ENCODE measurements at regions of chr2 and their contacts with region 1.

Region 1: DNA sequence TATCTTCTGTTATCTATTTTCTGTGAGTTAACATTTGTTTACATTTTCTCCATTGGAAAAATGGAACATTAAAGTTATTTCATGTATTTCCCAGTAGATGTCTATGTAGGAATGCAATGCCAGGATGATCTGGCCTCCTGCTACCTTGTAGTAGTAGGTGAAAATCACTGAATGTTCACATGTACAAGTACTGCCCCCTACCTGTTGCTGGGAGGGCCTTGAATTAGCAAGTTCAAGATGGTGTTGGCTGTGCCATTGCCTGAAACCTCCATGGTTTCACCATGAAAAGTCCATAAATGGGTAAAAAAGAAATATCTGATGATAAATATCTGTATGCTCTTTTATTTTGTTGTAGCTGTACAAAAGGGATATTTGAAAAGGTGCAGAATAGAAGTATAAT is 30.7 kb downstream of the XRCC5 start:
- DNase-seq: no peak
- H3K4me3 ChIP-seq: no peak overlapping the region
- H3K27ac ChIP-seq: no peak overlapping the region
- H3K4me1 ChIP-seq: no peaks in the 10 kb centered on the region
- H3K27me3 ChIP-seq: no peaks in the 10 kb centered on the region
- CTCF ChIP-seq: peak; percentile 17 to 66 (median 30)
- EP300 ChIP-seq: no peak
- POLR2A ChIP-seq: no peak
- RAD21 ChIP-seq: peak; percentile 18 to 40; a peak in 2 of 4 replicates

Region 2: GRCh38 chr2:216114714-216115557 is 24.9 kb before region 1 on chr2:
- CTCF ChIA-PET with region 1: interaction called, 18 read pairs
- POLR2A ChIA-PET with region 1: interaction called, 101 read pairs
- DNase-seq: peak; percentile 98 to 99
- H3K4me3 ChIP-seq: peak overlapping the region in 3 of 4 experiments; percentile 17 to 56 (median 24); a peak in 4 of 8 replicates
- H3K27ac ChIP-seq: peak overlapping the region; percentile 92
- H3K4me1 ChIP-seq: peaks cover 6 to 15% (median 10%) of the 10 kb centered on the region in 4 experiments; a peak in 6 of 7 replicates
- H3K27me3 ChIP-seq: no peaks in the 10 kb centered on the region
- CTCF ChIP-seq: peak; percentile 68 to 93 (median 75)
- EP300 ChIP-seq: no peak
- POLR2A ChIP-seq: peak; percentile 70 to 89
- RAD21 ChIP-seq: no peak; a peak in 1 of 4 replicates

Region 3: GRCh38 chr2:216119986-216120385 is 19.9 kb before region 1 on chr2:
- CTCF ChIA-PET with region 1: interaction called, 23 read pairs
- POLR2A ChIA-PET with region 1: interaction called, 101 read pairs
- DNase-seq: no peak
- H3K4me3 ChIP-seq: no peak overlapping the region
- H3K27ac ChIP-seq: no peak overlapping the region
- H3K4me1 ChIP-seq: peaks cover 0 to 6% (median 5%) of the 10 kb centered on the region in 4 experiments; a peak in 5 of 7 replicates
- H3K27me3 ChIP-seq: no peaks in the 10 kb centered on the region
- CTCF ChIP-seq: no peak
- EP300 ChIP-seq: no peak
- POLR2A ChIP-seq: no peak
- RAD21 ChIP-seq: no peak

Region 4: DNA sequence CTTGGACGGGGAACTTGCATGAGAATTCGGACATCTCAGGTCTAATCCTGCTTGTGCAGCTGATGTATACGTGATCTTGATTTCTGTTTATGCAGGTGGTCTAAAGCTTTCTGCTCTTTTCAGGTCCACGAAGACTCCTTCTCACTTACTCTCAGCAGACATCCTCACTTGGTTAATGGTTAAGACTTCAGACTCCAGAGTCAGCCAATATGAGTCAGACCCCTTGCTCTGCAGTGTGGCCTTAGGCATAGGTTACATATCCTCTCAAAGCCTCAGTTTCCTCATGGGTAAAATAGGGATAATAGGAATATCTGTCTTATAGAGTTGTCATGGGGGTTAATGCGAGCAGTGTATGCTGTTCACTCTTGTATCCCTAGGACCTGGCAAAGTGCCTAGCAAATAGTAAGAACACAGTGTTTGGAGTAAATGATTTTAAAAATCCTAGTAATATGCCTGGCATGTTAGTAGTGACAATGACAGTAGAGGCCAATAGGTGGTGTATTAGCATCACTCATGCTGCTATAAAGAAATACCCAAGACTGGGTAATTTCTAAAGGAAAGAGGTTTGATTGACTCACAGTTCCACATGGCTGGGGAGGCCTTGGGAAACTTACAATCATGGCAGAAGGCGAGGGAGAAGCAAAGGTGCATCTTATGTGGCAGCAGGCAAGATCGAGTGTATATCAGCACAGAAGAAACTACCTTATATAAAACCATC is 11.6 kb after region 1 on chr2:
- CTCF ChIA-PET with region 1: interaction called, 6 read pairs
- POLR2A ChIA-PET with region 1: interaction called, 32 read pairs
- DNase-seq: no peak
- H3K4me3 ChIP-seq: no peak overlapping the region
- H3K27ac ChIP-seq: no peak overlapping the region
- H3K4me1 ChIP-seq: no peaks in the 10 kb centered on the region
- H3K27me3 ChIP-seq: no peaks in the 10 kb centered on the region
- CTCF ChIP-seq: peak in 1 of 3 experiments; percentile 9; a peak in 1 of 4 replicates
- EP300 ChIP-seq: no peak
- POLR2A ChIP-seq: 0 out of 3 replicates have a peak, but pooled peaks of 1 of the 2 experiments have one; percentile 18
- RAD21 ChIP-seq: peak; percentile 12 to 18; a peak in 2 of 4 replicates

Region 5: DNA sequence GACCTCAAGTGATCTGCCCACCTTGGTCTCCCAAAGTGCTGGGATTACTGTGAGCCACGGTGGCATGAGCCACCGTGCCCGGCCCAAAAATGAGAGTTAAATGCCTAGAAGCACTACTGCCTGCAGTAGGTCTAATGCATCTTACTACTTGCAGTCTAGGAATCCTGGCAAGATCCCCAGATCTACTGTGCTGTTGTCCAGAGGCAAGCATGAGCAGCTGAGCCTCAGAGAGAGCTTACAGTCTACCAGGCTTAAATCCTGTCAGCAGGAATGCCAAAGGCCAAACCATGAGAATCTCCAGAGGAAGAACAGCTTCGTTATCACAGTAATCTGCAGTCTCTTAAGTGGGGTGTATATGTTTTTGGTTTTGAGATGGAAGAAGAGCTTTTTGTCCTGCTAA is 23.6 kb after region 1 on chr2:
- CTCF ChIA-PET with region 1: interaction called, 7 read pairs
- POLR2A ChIA-PET with region 1: interaction called, 32 read pairs
- DNase-seq: no peak
- H3K4me3 ChIP-seq: no peak overlapping the region
- H3K27ac ChIP-seq: no peak overlapping the region
- H3K4me1 ChIP-seq: no peaks in the 10 kb centered on the region
- H3K27me3 ChIP-seq: no peaks in the 10 kb centered on the region
- CTCF ChIP-seq: no peak
- EP300 ChIP-seq: no peak
- POLR2A ChIP-seq: no peak
- RAD21 ChIP-seq: no peak

Region 6: DNA sequence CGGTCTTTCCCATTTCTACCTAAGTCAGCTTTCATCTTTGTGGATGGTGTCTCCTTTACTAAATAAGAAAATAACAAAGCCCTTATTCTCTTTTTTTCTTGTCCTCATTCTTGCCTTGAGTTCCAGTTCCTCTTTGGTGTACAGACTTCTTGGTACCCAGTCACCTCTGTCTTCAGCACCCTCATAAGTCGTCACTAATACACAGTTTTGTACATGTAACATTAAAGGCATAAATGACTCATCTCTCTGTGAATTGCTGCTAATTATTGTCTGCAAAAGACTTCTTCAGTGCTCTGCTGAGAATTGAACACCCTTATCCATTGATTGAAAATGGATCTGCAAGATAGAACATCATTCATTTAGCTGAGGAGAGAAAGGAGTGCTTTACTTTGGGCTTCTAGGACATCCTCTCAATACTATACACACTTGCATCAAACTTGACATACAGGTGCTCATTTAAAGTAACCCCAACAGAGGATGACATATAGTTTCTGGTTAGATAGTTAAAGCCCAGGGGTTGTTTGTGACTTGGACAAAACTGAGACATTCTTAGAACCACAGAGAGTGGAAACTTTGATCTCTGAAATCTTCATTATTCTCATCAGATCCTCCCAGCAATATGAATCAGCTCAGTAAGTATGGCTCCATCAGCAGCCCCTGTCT is 66.3 kb after region 1 on chr2:
- CTCF ChIA-PET with region 1: no interaction called
- POLR2A ChIA-PET with region 1: no interaction called
- DNase-seq: no peak
- H3K4me3 ChIP-seq: no peak overlapping the region
- H3K27ac ChIP-seq: no peak overlapping the region
- H3K4me1 ChIP-seq: no peaks in the 10 kb centered on the region
- H3K27me3 ChIP-seq: peaks cover 0 to 2% (median 0%) of the 10 kb centered on the region in 4 experiments; a peak in 1 of 7 replicates
- CTCF ChIP-seq: no peak
- EP300 ChIP-seq: no peak
- POLR2A ChIP-seq: peak in 1 of 2 experiments; percentile 27; a peak in 2 of 3 replicates
- RAD21 ChIP-seq: no peak